RWPE1 (cell line): ENCODE measurements at regions of chr10 and their contacts with region 1.

Region 1: DNA sequence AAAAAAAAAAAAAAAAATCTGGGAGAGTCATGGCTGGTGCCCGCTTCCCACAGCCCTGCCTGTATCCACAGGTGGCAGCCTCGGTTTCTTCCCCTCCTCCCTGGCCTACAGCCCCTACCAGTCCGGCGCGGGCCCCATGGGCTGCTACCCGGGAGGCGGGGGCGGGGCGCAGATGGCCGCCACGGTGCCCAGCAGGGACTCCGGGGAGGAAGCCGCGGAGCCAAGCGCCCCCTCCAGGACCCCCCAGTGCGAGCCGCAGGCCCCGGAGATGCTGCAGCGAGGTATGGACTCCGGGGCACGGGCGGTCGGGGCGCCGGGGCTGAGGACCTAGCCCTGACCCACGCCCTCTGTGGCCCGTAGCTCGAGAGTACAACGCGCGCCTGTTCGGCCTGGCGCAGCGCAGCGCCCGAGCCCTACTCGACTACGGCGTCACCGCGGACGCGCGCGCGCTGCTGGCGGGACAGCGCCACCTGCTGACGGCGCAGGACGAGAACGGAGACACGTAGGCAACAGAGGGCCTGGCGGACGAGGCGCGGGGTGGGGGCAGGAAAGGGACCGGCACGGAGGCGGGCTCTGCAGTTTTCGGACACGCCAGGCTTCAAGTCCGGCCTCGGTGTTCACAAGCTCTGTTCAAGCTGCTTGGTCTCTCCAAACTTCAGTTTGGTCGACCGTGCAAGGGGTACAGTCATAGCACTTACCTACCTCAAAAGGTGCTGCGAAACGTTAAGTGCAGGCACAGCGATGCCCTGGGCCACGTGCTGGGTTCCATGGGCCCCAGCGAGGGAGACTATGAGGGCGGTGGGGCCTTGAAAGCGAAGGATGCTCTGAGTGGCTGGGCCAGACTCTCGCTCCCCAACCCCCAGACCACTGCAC is 3.9 kb downstream of the NFKB2 start:
- DNase-seq: peak; percentile 84
- H3K27ac ChIP-seq: peak overlapping the region; percentile 85
- CTCF ChIP-seq: peak; percentile 96

Region 2: GRCh38 chr10:101287997-101288635 is 1111.3 kb before region 1 on chr10:
- CTCF ChIA-PET with region 1: no interaction called
- POLR2A ChIA-PET with region 1: no interaction called
- DNase-seq: no peak
- H3K27ac ChIP-seq: no peak overlapping the region
- CTCF ChIP-seq: no peak

Region 3: GRCh38 chr10:102420810-102421644 is 21.6 kb after region 1 on chr10 and contains the start of gene FBXL15:
- CTCF ChIA-PET with region 1: interaction called, 108 read pairs
- POLR2A ChIA-PET with region 1: interaction called, 14 read pairs
- DNase-seq: peak; percentile 98
- H3K27ac ChIP-seq: peak within 1 kb of the TSS; percentile 96
- CTCF ChIP-seq: no peak